Astrocyte of the cerebellum (primary cell): ENCODE measurements at regions of chrX and their contacts with region 1.

Region 1: DNA sequence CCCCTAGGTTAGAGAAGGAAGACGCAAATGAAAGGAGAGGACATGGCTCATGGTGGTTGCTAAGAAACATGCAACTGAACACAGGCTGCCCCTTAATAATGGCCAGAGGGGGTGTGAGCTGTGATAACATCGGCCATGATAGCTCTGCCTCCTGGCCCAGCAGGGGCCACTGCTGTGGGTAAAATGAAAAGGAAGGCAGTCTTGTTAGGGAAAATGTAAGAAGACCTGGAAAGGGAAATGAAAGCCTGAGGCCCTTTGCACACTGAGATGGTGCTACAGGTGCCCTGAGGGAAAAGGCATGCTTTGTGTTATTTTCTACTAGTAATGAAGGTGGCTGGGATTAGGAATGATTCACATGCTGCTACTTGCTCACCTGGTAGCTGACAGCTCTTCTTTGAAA is 123.6 kb upstream of the MID1 start:
- DNase-seq: no peak
- H3K4me3 ChIP-seq: no peak overlapping the region
- CTCF ChIP-seq: no peak

Region 2: DNA sequence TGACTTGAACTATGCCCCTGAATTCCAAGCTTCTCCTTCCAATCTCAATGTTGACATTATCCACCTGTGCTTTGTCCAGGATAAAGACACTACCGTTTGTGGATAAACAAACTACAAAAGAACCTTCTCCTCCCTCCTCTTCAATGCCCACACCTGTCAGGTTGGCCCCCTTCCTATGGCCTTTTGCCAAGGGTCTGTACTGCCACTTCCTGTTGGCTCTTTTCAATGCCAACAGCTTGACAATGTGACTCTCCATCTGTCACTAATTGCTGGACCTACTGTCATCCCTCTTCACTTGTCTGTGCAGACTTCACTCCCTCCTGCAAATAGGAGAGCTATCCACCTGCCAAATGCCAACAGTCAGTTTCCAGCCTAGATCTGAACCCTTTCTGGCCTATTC is 87.8 kb before region 1 on chrX:
- in situ Hi-C with region 1: loop called (anchors 5 kb)
- DNase-seq: no peak
- H3K4me3 ChIP-seq: no peak overlapping the region
- CTCF ChIP-seq: no peak